Activated CD4-positive, alpha-beta memory T cell treated with anti-CD3 and anti-CD28 coated beads for 36 hours (primary cell): ENCODE measurements at regions of chr9 and their contacts with region 1.

Region 1: GRCh38 chr9:115013998-115014397 is 83.6 kb upstream of the TNFSF8 start:
- DNase-seq: peak; percentile 88
- H3K4me3 Mint-ChIP-seq: no peak overlapping the region
- H3K27ac Mint-ChIP-seq: peak overlapping the region; percentile 34
- H3K4me1 Mint-ChIP-seq: peaks cover 47% of the 10 kb centered on the region
- H3K27me3 Mint-ChIP-seq: peaks cover 2% of the 10 kb centered on the region

Region 2: DNA sequence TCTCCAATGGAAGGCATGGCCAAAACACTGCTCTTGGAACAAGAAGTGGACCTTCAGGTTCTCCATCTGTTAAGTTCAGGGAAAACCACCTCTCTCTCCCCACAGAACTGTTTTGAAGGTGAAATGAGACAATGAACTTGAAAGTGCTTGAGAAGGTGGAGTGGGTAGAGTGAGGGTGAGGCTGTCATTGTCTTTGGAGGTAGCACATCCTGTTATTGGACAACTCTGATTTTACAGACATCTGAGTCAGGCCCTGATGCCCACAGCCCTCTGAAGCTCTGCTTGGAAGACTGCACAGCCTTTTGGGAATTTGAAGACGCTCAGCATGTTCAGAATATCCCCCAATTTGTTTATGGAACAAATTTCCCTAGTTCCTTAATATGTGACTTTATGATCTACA is 304.4 kb before region 1 on chr9:
- CTCF ChIA-PET with region 1: interaction called, 10 read pairs
- POLR2A ChIA-PET with region 1: no interaction called
- intact Hi-C with region 1: no loop called
- DNase-seq: no peak
- H3K4me3 Mint-ChIP-seq: no peak overlapping the region
- H3K27ac Mint-ChIP-seq: peak overlapping the region; percentile 38
- H3K4me1 Mint-ChIP-seq: peaks cover 36% of the 10 kb centered on the region
- H3K27me3 Mint-ChIP-seq: no peaks in the 10 kb centered on the region

Region 3: DNA sequence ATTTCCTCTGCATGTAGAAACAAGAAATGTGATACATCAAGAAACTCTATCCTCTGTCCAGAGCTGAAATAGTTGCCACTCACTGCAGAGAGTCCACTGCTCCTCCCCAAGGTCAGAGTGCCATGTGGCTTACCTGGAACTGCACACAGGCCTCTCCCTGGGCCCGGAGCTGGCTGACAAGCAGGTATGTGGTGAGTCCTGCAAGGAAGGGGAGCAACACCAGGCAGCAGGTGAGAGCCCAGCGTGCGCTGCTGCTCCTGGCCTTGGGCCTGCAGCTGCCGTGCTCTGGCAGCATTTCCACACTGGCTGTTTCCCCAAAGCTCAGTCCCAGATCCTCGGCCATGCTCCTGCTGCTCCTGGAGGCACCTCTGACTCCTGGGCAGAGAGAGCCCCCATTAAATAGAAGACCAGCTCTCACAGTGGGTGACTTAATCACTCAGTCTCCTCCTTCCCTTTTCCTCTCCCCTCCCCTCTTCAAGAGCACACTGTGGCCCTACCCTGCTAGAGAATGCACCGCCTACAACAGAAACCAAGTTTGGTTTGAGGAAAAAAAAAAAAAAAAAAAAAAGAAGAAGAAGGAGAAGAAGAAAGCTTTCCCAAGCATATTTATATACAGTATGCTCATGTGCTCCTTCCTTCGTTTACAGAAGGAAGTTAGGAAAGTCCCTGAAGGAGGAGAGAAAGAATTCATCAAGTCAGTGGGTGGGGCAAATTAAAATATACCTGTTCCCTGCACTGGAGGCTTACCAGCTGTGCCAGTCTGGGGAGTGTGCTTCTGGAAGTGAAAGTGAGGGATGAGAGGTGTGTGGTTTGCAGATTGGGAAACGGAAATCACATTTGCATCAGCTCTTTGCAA is 208.1 kb before region 1 on chr9 and contains the start of gene TNFSF15:
- CTCF ChIA-PET with region 1: no interaction called
- POLR2A ChIA-PET with region 1: no interaction called
- intact Hi-C with region 1: loop called (anchors 2 kb)
- DNase-seq: peak; percentile 67
- H3K4me3 Mint-ChIP-seq: peak within 1 kb of the TSS; percentile 30
- H3K27ac Mint-ChIP-seq: no peak within 1 kb of the TSS
- H3K4me1 Mint-ChIP-seq: peaks cover 24% of the 10 kb centered on the region
- H3K27me3 Mint-ChIP-seq: no peaks in the 10 kb centered on the region
- total RNA-seq, gene TNFSF15: 0.12 to 0.14 TPM

Region 4: GRCh38 chr9:114930056-114930812 is 83.8 kb before region 1 on chr9 and contains the start of gene TNFSF8:
- CTCF ChIA-PET with region 1: interaction called, 10 read pairs
- POLR2A ChIA-PET with region 1: interaction called, 78 read pairs
- intact Hi-C with region 1: no loop called
- DNase-seq: peak; percentile 90
- H3K4me3 Mint-ChIP-seq: peak within 1 kb of the TSS; percentile 94
- H3K27ac Mint-ChIP-seq: peak within 1 kb of the TSS; percentile 97
- H3K4me1 Mint-ChIP-seq: peaks cover 44% of the 10 kb centered on the region
- H3K27me3 Mint-ChIP-seq: no peaks in the 10 kb centered on the region
- total RNA-seq, gene TNFSF8: 37.9 to 38.7 TPM

Region 5: GRCh38 chr9:115132648-115133047 is 118.7 kb after region 1 on chr9:
- CTCF ChIA-PET with region 1: no interaction called
- POLR2A ChIA-PET with region 1: no interaction called
- intact Hi-C with region 1: no loop called
- DNase-seq: no peak
- H3K4me3 Mint-ChIP-seq: no peak overlapping the region
- H3K27ac Mint-ChIP-seq: no peak overlapping the region
- H3K4me1 Mint-ChIP-seq: no peaks in the 10 kb centered on the region
- H3K27me3 Mint-ChIP-seq: peaks cover 18% of the 10 kb centered on the region

Region 6: GRCh38 chr9:115524453-115525059 is 510.6 kb after region 1 on chr9:
- CTCF ChIA-PET with region 1: interaction called, 8 read pairs
- POLR2A ChIA-PET with region 1: no interaction called
- intact Hi-C with region 1: loop called (anchors 5 kb)
- DNase-seq: no peak
- H3K4me3 Mint-ChIP-seq: no peak overlapping the region
- H3K27ac Mint-ChIP-seq: no peak overlapping the region
- H3K4me1 Mint-ChIP-seq: no peaks in the 10 kb centered on the region
- H3K27me3 Mint-ChIP-seq: peaks cover 11% of the 10 kb centered on the region